Calu3 (cell line): ENCODE measurements at regions of chr2 and their contacts with region 1.

Region 1: GRCh38 chr2:96760036-96760985 is at the start of gene CNNM4:
- DNase-seq: peak; percentile 93
- H3K4me3 Mint-ChIP-seq: peak within 1 kb of the TSS; percentile 72
- H3K27ac Mint-ChIP-seq: peak within 1 kb of the TSS; percentile 39
- H3K4me1 Mint-ChIP-seq: peaks cover 38% of the 10 kb centered on the region
- H3K27me3 Mint-ChIP-seq: no peaks in the 10 kb centered on the region
- CTCF ChIP-seq: no peak
- total RNA-seq, gene CNNM4: 17.6 and 22.3 TPM in 2 replicates

Region 2: DNA sequence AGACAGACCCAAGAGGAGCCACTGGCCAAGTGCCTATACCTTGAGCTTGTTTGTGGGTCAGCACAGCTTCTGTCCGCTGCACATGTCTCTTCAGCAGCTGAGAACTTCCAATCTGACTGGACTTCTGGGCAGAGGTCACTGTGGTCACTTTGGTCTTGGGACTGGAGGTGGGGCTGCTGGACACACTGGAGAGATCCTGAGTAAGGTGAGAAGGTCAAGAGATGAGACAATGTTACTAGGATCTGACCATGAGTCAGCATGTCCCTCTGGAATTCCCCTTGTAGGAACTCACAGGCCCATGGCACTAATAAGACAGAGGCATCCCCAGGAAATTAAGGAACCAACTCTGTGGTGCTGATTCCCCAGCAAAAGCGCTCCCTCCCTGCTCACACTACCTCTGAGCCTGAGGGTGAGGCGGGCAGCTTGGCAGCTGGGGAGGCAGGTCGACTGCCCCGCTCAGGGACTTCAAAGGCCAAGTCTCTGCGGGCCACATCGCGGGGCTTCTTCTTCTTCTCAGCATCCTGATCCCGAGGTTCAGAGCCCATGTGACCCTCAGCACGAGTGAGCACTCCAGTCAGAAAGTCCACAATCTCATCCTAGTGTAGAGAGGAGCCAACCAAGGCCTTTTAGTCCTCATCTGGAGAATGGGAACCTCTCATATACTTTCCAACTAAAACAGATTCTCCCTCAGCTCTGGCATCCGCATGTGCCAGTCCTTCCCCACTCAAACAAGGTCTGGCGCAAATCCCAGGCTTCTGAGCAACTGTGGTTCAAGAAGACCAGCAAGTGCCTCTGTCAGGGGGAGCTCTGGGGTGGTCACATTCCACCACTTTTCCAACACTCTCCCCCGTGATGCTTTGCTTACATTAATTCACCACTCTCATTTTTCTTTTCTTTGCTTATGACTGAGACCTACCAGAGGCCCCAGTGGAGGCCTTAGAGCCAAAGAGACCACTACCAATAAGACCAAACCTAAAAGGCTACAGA is 151.5 kb before region 1 on chr2:
- CTCF ChIA-PET with region 1: interaction called, 10 read pairs
- intact Hi-C with region 1: no loop called
- DNase-seq: no peak
- H3K4me3 Mint-ChIP-seq: no peak overlapping the region
- H3K27ac Mint-ChIP-seq: peak overlapping the region; percentile 61
- H3K4me1 Mint-ChIP-seq: no peaks in the 10 kb centered on the region
- H3K27me3 Mint-ChIP-seq: no peaks in the 10 kb centered on the region
- CTCF ChIP-seq: no peak

Region 3: DNA sequence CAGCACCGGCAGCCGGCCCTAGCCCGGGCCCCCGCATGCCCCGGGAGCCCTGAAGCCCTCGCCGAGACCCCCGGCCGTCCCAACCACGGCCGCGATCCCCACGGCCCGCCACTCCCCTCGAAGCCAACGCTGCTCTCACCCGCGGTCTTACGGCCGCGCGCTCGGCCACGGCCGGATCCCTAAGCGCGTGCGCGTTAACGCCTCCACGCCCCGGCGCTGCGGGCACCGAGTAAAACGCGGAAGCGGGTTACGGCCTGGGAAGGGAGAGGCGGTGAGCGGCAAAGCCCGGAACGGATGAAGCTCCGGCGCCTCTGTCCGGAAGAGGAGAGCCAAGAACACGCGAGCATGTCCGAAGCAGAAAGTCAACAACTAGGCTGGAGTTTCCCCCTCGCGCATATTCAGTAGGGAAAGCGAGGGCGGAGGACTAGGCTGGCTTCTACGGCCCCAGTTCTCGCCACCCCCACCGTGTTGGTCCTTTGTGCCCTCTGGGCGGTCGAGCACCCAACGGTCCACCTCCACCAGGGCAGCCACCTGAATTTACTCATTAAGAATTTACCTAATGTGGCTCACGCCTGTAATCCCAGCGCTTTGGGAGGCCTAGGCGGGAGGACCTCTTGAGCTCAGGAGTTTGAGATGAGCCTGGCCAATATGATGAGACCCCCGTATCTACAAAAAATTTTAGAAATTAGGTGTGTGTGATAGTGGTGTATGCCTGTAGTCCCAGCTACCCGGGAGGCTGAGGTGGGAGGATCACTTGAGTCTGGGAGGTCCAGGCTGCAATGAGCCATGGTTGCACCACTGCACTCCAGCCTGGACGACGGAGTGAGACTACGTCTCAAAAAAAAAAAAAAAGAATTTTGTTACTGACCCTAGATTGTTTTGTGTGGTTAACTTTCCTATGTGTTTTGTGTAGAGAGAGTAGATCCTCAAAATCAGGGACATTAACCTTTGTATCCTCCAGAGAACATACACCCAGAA is 121.9 kb before region 1 on chr2 and contains the start of gene KANSL3:
- CTCF ChIA-PET with region 1: interaction called, 7 read pairs
- intact Hi-C with region 1: loop called (anchors 5 kb)
- DNase-seq: peak; percentile 93
- H3K4me3 Mint-ChIP-seq: peak within 1 kb of the TSS; percentile 79
- H3K27ac Mint-ChIP-seq: peak within 1 kb of the TSS; percentile 60
- H3K4me1 Mint-ChIP-seq: peaks cover 19% of the 10 kb centered on the region
- H3K27me3 Mint-ChIP-seq: no peaks in the 10 kb centered on the region
- CTCF ChIP-seq: no peak
- total RNA-seq, gene KANSL3: 39.6 and 43.9 TPM in 2 replicates

Region 4: DNA sequence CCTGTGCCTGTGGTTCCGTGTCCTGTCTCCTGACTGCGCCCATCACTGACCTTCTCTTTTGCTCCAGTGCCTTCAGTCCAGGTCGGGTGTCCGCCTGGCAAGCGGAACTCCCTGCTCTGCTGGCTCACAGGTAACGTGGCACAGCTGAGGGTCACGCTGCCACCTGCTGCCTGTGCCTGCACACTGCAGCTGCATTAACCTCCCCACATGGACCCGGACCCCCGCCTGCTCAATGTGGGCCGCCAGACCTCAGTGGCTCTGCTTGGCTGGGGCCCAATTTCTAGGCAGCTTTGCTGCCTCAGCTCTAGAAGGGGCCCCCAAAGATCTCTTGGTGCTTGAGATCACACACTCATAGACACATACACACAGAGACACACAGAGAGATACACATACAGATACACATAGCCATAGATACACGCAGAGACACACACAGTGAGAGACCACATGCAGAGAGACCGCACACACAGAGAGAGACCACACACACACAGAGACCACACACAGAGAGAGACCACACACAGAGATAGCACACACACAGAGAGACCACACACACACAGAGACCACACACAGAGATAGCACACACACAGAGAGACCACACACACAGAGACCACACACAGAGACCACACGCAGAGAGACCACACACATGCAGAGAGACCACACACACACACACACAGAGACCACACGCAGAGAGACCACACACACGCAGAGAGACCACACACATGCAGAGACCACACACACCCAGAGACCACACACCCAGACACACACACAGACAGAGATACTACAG is 40.9 kb after region 1 on chr2:
- CTCF ChIA-PET with region 1: interaction called, 6 read pairs
- intact Hi-C with region 1: loop called (anchors 2 kb)
- DNase-seq: peak; percentile 79
- H3K4me3 Mint-ChIP-seq: no peak overlapping the region
- H3K27ac Mint-ChIP-seq: no peak overlapping the region
- H3K4me1 Mint-ChIP-seq: peaks cover 3% of the 10 kb centered on the region
- H3K27me3 Mint-ChIP-seq: no peaks in the 10 kb centered on the region
- CTCF ChIP-seq: peak; percentile 80

Region 5: GRCh38 chr2:96816128-96816835 is 56.0 kb after region 1 on chr2 and contains the start of gene CNNM3:
- CTCF ChIA-PET with region 1: interaction called, 5 read pairs
- intact Hi-C with region 1: loop called (anchors 5 kb)
- DNase-seq: peak; percentile 98
- H3K4me3 Mint-ChIP-seq: peak within 1 kb of the TSS; percentile 77
- H3K27ac Mint-ChIP-seq: peak within 1 kb of the TSS; percentile 52
- H3K4me1 Mint-ChIP-seq: peaks cover 38% of the 10 kb centered on the region
- H3K27me3 Mint-ChIP-seq: no peaks in the 10 kb centered on the region
- CTCF ChIP-seq: peak; percentile 65
- total RNA-seq, gene CNNM3: 22.5 and 25.1 TPM in 2 replicates

Region 6: GRCh38 chr2:96835830-96836229 is 75.5 kb after region 1 on chr2:
- CTCF ChIA-PET with region 1: no interaction called
- intact Hi-C with region 1: no loop called
- DNase-seq: no peak
- H3K4me3 Mint-ChIP-seq: no peak overlapping the region
- H3K27ac Mint-ChIP-seq: no peak overlapping the region
- H3K4me1 Mint-ChIP-seq: peaks cover 20% of the 10 kb centered on the region
- H3K27me3 Mint-ChIP-seq: no peaks in the 10 kb centered on the region
- CTCF ChIP-seq: no peak

Region 7: DNA sequence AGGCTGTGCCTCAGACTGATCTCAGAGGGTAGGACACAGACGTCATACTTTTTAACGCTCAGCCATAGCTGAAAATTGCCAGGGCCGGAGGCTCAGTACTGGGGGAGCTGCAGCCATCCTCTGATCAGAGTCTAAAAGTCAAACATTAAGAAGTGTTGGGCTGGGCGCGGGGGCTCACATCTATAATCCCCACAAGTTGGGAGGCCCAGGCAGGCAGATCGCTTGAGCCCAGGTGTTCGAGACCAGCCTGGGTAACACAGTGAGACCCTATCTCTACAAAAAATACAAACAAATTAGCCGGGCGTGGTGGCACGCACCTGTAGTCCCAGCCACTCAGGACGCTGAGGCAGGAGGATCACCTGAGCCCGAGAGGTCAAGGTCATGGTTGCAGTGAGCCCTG is 177.3 kb after region 1 on chr2:
- CTCF ChIA-PET with region 1: interaction called, 18 read pairs
- intact Hi-C with region 1: no loop called
- DNase-seq: no peak
- H3K4me3 Mint-ChIP-seq: no peak overlapping the region
- H3K27ac Mint-ChIP-seq: no peak overlapping the region
- H3K4me1 Mint-ChIP-seq: no peaks in the 10 kb centered on the region
- H3K27me3 Mint-ChIP-seq: peaks cover 67% of the 10 kb centered on the region
- CTCF ChIP-seq: no peak